CD4-positive, alpha-beta memory T cell (primary cell): ENCODE measurements at regions of chr20 and their contacts with region 1.

Region 1: DNA sequence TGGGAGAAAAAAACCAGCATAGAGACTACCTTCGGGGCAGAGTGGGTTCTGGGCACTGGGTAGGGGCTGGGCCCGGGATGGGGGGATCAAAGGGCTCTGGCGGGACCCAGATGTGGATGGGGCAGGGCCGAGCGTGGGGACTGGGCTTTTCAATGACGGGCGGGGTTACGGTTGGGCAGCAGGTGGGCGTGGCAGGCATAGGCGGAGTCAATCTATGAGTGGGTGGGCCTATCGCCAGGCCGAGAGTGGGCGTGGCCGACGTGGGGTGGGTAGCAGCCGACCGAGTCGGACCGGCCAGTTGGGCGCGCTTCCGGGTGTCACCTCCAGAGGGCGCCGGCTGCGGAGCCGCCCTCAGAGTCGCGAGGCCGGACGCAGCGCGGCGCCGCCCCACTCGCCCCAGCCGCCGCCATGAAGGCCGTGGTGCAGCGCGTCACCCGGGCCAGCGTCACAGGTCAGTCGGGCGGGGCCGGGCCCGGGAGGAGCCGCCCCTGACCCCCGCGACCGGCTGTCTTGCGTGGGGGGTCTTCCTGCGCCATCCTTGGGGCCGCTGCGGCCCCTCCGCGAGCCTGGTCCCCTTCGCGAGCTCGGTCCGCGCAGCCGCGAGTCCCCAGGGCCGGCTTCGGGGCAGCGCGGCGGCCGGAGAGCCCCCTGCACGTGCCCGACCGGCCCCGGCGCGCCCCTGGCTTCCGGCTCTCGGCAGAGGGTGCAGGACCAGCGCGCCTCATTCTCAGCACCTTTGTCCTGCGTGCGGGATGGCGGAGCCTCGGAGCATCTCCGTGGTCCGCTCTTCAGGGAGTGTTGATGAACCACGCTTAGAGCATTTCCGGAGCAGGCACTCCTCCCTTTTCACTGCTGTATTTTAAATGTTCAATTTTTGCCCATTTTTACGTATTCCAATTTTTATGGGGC is at the start of gene DTD1:
- DNase-seq: peak; percentile 66 to 77 (median 69)
- H3K4me3 ChIP-seq: peak within 1 kb of the TSS; percentile 47 to 80
- H3K4me3 Mint-ChIP-seq: peak within 1 kb of the TSS; percentile 87 to 95 (median 91)
- H3K27ac ChIP-seq: peak within 1 kb of the TSS; percentile 71
- H3K27ac Mint-ChIP-seq: peak within 1 kb of the TSS; percentile 88 to 97 (median 95)
- H3K4me1 ChIP-seq: peaks cover 27% of the 10 kb centered on the region
- H3K4me1 Mint-ChIP-seq: peaks cover 18 to 27% (median 23%) of the 10 kb centered on the region in 4 donors
- H3K27me3 ChIP-seq: no peaks in the 10 kb centered on the region
- H3K27me3 Mint-ChIP-seq: peaks cover 4 to 5% of the 10 kb centered on the region in 2 donors
- total RNA-seq, gene DTD1: 15.9 to 18.1 TPM

Region 2: DNA sequence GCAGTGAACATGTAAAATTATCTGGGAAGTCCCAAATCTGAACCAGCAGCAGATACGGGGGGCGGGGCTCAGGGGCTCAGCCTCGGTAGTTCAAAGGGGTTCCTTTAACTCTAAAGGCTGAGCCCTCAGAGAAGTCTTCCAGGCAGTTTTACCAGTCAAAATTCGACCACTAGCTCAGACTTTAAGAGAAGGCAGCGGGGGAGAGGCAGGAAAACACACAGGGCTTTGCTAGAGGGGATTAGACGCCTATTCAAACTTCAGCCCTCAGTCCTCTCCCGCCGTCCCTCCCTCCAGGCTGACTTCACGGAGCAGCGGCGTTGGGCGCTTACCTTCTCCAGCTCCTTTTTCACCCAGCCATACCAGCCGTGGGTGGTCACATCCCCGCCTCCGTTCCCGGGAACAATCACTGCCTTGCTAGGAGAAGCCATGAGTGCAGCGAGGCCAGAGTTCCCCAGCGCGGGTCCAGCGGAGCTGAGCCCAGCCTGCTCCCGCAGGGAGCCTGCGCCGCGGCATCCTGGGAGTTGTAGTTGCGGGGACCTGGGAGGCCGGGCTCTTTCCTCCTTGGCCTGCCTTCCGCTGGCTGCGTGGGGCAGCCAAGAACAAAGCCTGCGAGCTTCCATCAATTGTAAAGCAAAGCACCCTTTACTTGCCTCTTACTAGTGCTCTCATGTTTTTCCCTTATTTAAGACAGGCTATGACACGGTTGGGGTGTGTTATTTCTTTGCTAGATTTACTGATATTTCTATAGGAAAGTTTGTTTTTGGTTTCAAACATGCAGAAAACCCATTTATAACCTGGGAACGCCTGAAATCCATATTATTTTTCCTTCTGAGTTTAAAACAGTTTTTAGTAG is 91.0 kb before region 1 on chr20 and contains the start of gene RBBP9:
- CTCF ChIA-PET with region 1: no interaction called
- POLR2A ChIA-PET with region 1: no interaction called
- intact Hi-C with region 1: loop called (anchors 1 kb)
- DNase-seq: peak; percentile 69 to 77 (median 72)
- H3K4me3 ChIP-seq: peak within 1 kb of the TSS; percentile 53 to 71
- H3K4me3 Mint-ChIP-seq: peak within 1 kb of the TSS; percentile 95 to 98 (median 97)
- H3K27ac ChIP-seq: peak within 1 kb of the TSS; percentile 69
- H3K27ac Mint-ChIP-seq: peak within 1 kb of the TSS; percentile 81 to 98 (median 96)
- H3K4me1 ChIP-seq: peaks cover 13% of the 10 kb centered on the region
- H3K4me1 Mint-ChIP-seq: peaks cover 9 to 21% (median 15%) of the 10 kb centered on the region in 4 donors
- H3K27me3 ChIP-seq: no peaks in the 10 kb centered on the region
- H3K27me3 Mint-ChIP-seq: peaks cover 2 to 3% of the 10 kb centered on the region in 2 donors
- total RNA-seq, gene RBBP9: 9.0 to 9.2 TPM

Region 3: DNA sequence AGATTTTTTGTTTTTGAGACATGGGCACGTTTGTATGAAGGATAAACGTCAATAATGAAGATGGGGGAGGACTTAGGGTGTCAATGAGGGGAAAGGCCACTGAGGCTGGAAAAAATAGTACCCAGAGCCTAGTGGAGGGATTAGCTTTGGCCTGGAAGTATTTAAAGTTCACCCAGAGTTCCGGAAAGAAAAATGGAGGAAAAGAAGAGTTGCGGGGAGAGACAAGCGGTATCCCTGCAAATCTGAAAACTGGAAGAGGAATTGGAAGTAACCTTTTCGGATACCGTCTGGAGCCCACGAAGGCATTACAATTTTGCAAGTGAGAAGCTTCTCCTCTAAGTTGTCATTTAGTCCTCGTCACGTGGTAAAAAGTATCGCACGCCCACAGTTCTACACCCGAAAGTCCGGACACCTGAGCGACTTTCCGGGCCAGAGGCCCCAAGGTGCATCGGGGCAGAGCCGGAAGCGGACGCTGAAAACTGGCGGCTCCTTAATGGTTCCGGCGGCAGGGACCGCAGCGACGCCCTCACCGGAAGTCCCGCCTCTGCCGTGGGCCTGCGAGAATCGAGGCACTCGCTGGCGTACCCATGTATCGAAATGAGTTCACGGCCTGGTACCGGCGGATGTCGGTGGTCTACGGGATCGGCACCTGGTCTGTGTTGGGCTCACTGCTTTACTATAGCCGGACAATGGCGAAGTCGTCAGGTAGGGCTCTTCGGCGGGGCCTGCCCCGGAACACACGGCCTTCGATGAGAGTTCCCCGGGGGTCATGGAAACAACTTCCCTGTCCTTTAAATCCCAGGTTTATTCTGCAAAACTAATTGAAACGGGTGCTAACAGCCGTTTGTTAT is 20.8 kb before region 1 on chr20 and contains the start of gene SMIM26:
- CTCF ChIA-PET with region 1: no interaction called
- POLR2A ChIA-PET with region 1: interaction called, 12 read pairs
- intact Hi-C with region 1: loop called (anchors 1 kb)
- DNase-seq: peak; percentile 92 to 94 (median 93)
- H3K4me3 ChIP-seq: peak within 1 kb of the TSS; percentile 77 to 78
- H3K4me3 Mint-ChIP-seq: peak within 1 kb of the TSS; percentile 94 to 99 (median 97)
- H3K27ac ChIP-seq: peak within 1 kb of the TSS; percentile 96
- H3K27ac Mint-ChIP-seq: peak within 1 kb of the TSS; percentile 93 to 100 (median 99)
- H3K4me1 ChIP-seq: peaks cover 13% of the 10 kb centered on the region
- H3K4me1 Mint-ChIP-seq: peaks cover 9 to 34% (median 14%) of the 10 kb centered on the region in 4 donors
- H3K27me3 ChIP-seq: no peaks in the 10 kb centered on the region
- H3K27me3 Mint-ChIP-seq: no peaks in the 10 kb centered on the region
- total RNA-seq, gene SMIM26: 60.2 to 64.2 TPM

Region 4: DNA sequence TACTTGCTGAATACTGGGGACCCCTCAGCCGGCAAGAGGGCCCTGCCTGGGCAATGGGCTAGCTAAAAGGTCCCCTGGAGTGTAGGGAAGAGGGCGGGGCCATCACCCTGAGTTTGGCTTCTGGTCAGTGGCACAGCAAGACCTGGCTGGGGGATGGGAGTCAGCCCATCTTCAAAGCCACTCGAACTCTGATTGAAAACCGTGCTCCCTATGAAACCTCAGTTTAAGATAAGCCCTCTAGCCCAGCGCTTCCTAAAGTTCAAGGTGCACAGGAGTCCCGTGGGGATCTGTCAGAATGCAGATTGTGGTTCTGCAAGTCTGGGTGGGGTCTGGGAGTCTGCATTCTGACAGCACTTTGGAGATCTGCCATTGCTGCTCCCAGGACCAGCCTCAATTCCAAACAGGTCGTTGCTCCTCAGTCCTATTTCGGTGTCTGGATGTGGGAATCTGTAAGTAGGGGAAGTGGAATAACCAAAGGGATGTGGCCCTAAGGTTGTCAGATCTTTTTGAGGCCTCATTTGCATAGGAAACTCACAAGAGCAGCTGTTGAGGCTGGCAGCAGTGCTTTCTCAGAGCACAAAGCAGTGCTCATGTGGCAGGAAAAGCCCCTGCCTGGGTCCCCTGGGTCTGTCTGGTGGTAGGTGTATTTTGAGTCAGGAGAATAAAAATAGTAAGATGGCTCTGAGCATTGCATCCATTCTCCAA is 140.4 kb after region 1 on chr20:
- CTCF ChIA-PET with region 1: no interaction called
- POLR2A ChIA-PET with region 1: no interaction called
- intact Hi-C with region 1: no loop called
- DNase-seq: no peak
- H3K4me3 ChIP-seq: no peak overlapping the region
- H3K4me3 Mint-ChIP-seq: no peak overlapping the region
- H3K27ac ChIP-seq: no peak overlapping the region
- H3K27ac Mint-ChIP-seq: peak overlapping the region in 1 of 7 donors; percentile 3
- H3K4me1 ChIP-seq: no peaks in the 10 kb centered on the region
- H3K4me1 Mint-ChIP-seq: peaks cover 8 to 31% (median 22%) of the 10 kb centered on the region in 4 donors
- H3K27me3 ChIP-seq: no peaks in the 10 kb centered on the region
- H3K27me3 Mint-ChIP-seq: no peaks in the 10 kb centered on the region

Region 5: DNA sequence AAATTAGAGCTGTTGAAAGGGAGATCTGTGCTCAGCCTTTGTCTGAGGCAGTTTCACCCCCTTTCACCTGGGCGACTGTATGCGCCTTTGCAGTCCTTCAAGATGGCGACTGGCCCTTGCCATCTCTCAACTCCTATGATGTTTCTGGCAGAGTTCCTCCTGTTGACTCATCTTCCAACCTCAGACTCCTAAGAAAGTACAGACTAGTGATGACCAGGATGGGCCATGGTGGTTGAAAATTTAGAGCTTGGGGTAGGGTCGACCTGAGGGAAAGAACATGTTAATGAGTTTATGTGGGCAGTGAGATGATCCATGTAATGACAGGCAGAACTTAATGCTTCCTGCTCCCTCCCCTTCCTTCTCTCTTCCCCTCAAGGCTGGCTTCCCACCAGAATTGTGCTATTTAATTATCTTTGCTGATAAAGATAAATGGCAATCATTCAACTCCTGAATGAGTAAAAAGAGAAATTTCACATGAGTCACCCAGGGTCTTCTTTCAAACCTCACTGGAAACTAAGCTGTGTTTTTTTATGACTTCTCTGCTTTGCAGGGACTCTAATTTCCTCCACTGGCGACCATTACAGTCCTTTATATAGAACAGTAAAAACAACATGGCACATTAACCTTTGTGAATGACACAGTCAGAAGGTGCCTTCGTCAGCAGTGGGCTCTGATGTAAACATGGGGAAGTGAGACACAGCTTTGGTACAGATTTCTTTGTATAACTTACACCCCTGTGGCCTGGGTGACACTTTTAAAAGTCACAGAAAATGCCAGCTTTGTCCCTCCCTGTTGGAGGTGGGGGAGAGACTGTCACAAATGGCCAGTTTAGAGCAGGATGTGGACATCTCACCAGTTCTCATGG is 329.2 kb after region 1 on chr20:
- CTCF ChIA-PET with region 1: no interaction called
- POLR2A ChIA-PET with region 1: no interaction called
- intact Hi-C with region 1: no loop called
- DNase-seq: no peak
- H3K4me3 ChIP-seq: no peak overlapping the region
- H3K4me3 Mint-ChIP-seq: no peak overlapping the region
- H3K27ac ChIP-seq: no peak overlapping the region
- H3K27ac Mint-ChIP-seq: no peak overlapping the region
- H3K4me1 ChIP-seq: no peaks in the 10 kb centered on the region
- H3K4me1 Mint-ChIP-seq: no peaks in the 10 kb centered on the region
- H3K27me3 ChIP-seq: no peaks in the 10 kb centered on the region
- H3K27me3 Mint-ChIP-seq: peaks cover 3 to 8% of the 10 kb centered on the region in 2 donors

Region 6: GRCh38 chr20:20017001-20017843 is 1429.3 kb after region 1 on chr20 and contains the start of gene NAA20:
- CTCF ChIA-PET with region 1: no interaction called
- POLR2A ChIA-PET with region 1: no interaction called
- intact Hi-C with region 1: loop called (anchors 5 kb)
- DNase-seq: peak; percentile 86 to 93 (median 88)
- H3K4me3 ChIP-seq: peak within 1 kb of the TSS; percentile 61 to 70
- H3K4me3 Mint-ChIP-seq: peak within 1 kb of the TSS; percentile 86 to 96 (median 94)
- H3K27ac ChIP-seq: peak within 1 kb of the TSS; percentile 85
- H3K27ac Mint-ChIP-seq: peak within 1 kb of the TSS; percentile 88 to 98 (median 94)
- H3K4me1 ChIP-seq: peaks cover 54% of the 10 kb centered on the region
- H3K4me1 Mint-ChIP-seq: peaks cover 35 to 58% (median 47%) of the 10 kb centered on the region in 4 donors
- H3K27me3 ChIP-seq: no peaks in the 10 kb centered on the region
- H3K27me3 Mint-ChIP-seq: no peaks in the 10 kb centered on the region
- total RNA-seq, gene NAA20: 32.5 to 33.5 TPM